ENCODE measurements at regions of chr19 and their contacts with region 1.

Region 1: DNA sequence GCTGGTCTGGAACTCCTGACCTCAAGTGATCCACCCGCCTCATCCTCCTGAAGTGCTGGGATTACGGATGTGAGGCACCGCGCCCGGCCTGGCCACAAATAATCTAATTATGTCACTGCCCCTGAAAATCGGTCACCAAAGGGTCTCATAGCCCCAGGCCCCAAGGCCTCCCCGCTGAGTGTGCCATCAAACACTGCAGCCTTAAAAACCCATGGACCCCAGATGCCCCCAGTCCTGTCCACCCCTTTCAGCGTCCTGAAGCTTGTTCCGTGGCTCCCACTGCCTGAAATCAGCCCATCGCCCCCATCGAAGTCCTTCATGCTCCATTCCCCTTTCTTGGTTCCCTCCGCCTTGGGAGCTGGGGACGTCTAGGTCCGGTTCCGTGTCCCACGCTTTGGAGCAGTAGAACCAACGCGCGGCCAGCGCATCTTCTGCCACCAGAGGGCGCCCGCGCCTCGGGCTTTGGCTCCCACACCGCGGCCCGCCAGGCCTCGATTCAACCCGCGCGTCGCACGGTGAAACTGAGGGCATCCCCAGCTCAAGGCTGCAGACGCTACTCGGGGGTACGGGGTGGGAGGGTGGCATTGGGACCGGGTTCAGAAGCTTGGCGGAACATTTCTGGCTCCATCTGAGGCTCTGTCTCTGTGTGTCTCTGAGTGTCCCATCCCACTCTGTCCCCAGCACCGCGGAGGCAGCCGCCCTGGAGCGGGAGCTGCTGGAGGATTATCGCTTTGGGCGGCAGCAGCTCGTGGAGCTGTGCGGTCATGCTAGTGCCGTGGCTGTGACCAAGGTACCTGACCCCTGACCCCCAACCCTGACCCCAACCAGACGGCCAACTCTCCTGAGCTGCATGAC is 3.5 kb downstream of the YJEFN3 start:
- DNase-seq: peak; percentile 86
- H3K4me3 Mint-ChIP-seq: no peak overlapping the region
- H3K27ac Mint-ChIP-seq: no peak overlapping the region
- H3K4me1 Mint-ChIP-seq: peaks cover 9% of the 10 kb centered on the region
- H3K27me3 Mint-ChIP-seq: peaks cover 3% of the 10 kb centered on the region

Region 2: GRCh38 chr19:19342756-19343322 is 189.3 kb before region 1 on chr19:
- CTCF ChIA-PET with region 1: no interaction called
- POLR2A ChIA-PET with region 1: no interaction called
- DNase-seq: no peak
- H3K4me3 Mint-ChIP-seq: no peak overlapping the region
- H3K27ac Mint-ChIP-seq: no peak overlapping the region
- H3K4me1 Mint-ChIP-seq: no peaks in the 10 kb centered on the region
- H3K27me3 Mint-ChIP-seq: no peaks in the 10 kb centered on the region

Region 3: DNA sequence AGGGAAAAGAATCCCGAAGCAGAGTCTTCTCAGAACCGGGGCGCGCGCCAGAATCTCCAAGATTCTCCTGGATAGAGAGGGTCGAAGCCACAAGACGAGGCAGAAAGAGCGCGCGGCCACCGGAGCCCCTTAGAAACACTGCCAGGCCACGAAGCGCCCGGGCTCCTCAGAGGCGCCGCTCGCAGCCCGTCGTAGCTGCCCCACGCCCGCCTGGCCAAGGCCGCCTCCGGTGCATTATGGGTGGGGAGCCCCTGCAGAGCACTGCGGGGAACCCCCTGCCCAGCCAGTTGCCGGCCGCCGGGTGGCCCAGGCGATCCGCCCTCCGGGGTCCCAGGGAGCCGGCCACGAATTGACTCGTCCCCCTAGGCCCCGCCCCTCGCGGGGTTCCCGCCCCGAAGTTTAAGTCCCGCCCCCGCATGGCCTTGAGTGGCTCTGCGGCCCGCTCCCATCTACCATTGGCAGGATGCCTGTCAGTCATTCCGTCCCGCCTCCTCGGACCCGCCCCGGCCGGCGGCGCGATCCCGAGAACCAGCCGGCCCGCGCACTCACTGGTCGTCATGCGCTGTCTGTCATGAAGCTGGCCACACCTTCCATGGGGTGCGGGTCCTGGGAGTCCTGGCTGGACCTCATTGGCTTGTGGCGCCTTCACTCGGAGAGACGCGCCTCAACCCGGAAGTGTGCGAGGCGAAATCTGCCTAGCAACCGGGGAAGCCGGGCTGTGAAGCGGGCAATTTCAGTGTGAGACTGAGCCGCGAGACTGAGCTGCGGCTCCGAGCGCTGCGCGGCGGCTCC is 146.9 kb before region 1 on chr19:
- CTCF ChIA-PET with region 1: no interaction called
- POLR2A ChIA-PET with region 1: no interaction called
- DNase-seq: peak; percentile 100
- H3K4me3 Mint-ChIP-seq: peak overlapping the region; percentile 87
- H3K27ac Mint-ChIP-seq: peak overlapping the region; percentile 91
- H3K4me1 Mint-ChIP-seq: peaks cover 46% of the 10 kb centered on the region
- H3K27me3 Mint-ChIP-seq: no peaks in the 10 kb centered on the region

Region 4: DNA sequence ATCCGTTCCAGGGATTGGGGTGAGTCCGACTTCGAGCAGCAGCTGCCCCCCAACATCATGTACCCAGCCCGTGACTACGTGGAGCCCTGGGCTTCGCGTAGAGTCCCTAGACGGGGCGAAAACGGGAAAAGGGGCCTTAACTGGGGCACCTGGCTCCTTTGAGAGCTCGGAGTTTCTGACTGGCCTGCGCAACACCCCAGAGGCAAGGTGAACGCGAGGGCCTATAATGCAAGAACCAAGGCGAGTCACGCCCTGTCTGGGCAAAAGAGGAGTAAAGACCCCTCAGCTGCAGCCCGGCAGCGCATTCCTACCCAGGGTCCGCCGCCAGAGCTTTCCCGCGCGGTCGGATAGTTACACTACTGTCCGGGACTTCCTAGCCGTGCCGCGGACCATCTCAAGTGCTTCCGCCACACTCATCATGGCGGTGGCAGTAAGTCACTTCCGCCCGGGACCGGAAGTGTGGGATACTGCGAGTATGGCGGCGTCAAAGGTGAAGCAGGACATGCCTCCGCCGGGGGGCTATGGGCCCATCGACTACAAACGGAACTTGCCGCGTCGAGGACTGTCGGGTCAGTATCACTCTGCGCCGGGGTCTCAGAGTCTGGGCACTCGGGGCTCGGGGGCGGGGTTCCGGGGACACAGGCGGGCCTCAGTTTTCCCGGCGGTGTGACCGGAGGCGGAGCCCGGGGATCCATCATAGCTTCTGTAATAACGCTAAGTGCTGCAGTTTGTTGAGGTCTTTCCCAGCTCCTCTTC is 16.2 kb before region 1 on chr19 and contains the start of gene NDUFA13:
- CTCF ChIA-PET with region 1: interaction called, 11 read pairs
- POLR2A ChIA-PET with region 1: interaction called, 10 read pairs
- DNase-seq: peak; percentile 95
- H3K4me3 Mint-ChIP-seq: peak within 1 kb of the TSS; percentile 93
- H3K27ac Mint-ChIP-seq: peak within 1 kb of the TSS; percentile 94
- H3K4me1 Mint-ChIP-seq: peaks cover 33% of the 10 kb centered on the region
- H3K27me3 Mint-ChIP-seq: no peaks in the 10 kb centered on the region
- total RNA-seq, gene NDUFA13: 371 to 388 TPM

Region 5: DNA sequence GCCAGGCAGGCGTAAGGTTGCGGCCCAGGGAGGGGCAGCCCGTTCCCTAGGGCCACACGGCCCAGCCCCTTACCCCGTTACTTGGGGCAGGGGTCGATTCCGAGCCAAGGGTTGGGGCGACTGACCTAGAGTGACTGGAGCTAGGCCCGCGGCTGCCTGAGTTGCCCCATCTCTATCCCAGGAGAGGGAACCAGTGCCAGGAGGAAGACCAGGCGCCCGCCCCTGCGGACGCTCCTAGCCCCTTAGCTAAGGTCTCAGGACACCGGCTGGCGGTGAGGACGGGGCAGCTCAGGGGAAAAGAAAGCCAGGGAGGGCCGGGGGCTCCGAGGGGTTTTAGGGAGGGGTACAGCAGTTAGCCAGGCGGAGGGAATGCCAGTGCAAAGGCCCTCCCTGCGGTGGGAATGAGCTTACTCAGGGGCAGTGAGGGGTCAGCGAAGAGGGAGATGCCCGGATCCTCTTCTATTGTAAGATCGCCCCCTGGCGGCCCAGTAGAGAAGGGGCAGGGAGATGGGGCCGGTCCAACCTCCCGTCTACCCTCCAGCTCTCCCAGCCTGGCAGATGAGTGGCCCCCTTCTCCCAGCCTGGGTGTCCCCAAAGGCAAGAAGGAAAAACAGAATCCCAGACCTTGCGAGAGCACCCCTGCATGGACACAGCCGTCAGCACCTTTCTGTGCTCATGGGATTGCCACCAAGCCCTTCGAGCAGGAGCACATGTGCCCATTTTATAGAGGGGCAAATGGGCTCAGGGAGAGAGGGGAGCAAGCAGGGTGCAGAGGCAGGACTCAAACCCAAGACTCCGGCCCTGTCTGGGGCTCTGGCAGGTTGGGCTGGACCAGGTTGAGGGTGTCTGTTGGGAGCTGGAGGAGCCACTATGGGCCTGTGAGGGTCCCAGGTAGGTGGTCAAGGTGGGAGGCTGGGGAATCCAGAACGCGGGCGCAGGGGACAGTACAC is 22.2 kb after region 1 on chr19:
- CTCF ChIA-PET with region 1: interaction called, 25 read pairs
- POLR2A ChIA-PET with region 1: interaction called, 4 read pairs
- DNase-seq: peak; percentile 67
- H3K4me3 Mint-ChIP-seq: no peak overlapping the region
- H3K27ac Mint-ChIP-seq: no peak overlapping the region
- H3K4me1 Mint-ChIP-seq: peaks cover 10% of the 10 kb centered on the region
- H3K27me3 Mint-ChIP-seq: no peaks in the 10 kb centered on the region

Region 6: GRCh38 chr19:19591133-19591825 is 59.1 kb after region 1 on chr19:
- CTCF ChIA-PET with region 1: interaction called, 11 read pairs
- POLR2A ChIA-PET with region 1: interaction called, 5 read pairs
- DNase-seq: peak; percentile 80
- H3K4me3 Mint-ChIP-seq: peak overlapping the region; percentile 43
- H3K27ac Mint-ChIP-seq: peak overlapping the region; percentile 93
- H3K4me1 Mint-ChIP-seq: peaks cover 80% of the 10 kb centered on the region
- H3K27me3 Mint-ChIP-seq: no peaks in the 10 kb centered on the region

Region 7: DNA sequence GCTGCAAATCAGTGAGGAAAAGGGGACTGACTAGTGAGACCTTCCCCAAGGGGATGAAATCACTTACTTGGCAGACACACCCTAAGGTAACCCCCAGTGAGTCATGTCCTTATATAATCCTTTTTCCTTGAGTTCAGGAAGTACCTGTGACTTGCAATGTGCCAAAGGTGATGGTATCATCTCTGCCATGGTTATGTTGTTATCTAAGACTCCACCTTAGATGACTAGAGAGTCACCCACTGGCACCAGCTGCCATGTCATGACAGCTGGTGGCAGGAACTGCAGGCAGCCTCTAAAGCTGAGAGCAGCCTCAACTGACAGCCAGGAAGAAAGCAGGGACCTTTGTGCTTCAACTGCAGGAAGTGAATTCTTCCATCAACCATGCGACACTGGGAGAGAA is 73.8 kb after region 1 on chr19:
- CTCF ChIA-PET with region 1: interaction called, 10 read pairs
- POLR2A ChIA-PET with region 1: interaction called, 5 read pairs
- DNase-seq: peak; percentile 65
- H3K4me3 Mint-ChIP-seq: peak overlapping the region; percentile 41
- H3K27ac Mint-ChIP-seq: peak overlapping the region; percentile 98
- H3K4me1 Mint-ChIP-seq: peaks cover 76% of the 10 kb centered on the region
- H3K27me3 Mint-ChIP-seq: no peaks in the 10 kb centered on the region

Region 8: DNA sequence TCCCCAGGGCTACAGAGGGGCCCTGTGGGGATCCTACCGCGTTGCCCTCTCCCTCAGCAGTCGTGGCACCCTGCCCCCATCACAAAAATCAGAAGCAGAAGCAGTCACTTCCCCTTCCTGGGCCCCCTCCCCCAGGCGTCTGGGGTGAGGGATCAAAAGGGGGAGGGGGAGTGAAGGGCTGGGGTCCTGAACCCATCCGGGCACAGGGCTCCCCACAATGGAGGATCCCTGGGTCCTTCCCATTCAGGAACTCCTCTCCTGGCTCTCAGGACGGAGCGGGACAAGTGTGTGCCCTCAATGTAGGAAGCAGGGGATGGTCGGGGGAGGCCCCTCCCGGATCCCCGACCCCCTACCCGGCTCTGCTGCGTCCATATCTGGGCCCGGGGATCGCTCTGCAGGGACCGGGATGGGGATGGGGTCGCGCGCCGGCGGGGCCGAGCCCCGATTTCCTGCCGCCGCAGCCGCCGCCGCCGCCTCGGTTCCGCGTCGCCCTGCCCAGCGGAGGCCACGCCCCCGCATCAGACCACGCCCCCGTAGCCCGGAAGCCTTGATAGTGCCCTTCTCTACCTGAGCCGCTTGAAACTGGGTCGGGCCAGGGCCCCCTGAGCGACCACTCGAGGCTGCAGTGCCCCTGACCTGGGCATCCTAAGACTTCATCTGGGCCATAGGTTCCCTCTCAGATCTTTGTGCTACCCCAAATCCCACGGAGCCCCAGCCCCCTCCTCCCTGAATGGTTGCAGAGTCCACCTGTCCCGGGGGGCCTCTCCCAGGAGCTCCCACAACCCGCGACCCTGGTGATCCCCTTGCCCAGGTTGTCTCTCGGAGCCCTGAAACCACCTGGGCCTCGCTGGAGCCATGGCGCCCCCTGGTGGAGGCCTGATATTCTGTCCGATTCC is 111.2 kb after region 1 on chr19 and contains the start of gene GMIP:
- CTCF ChIA-PET with region 1: interaction called, 34 read pairs
- POLR2A ChIA-PET with region 1: interaction called, 22 read pairs
- DNase-seq: peak; percentile 90
- H3K4me3 Mint-ChIP-seq: peak within 1 kb of the TSS; percentile 98
- H3K27ac Mint-ChIP-seq: peak within 1 kb of the TSS; percentile 96
- H3K4me1 Mint-ChIP-seq: peaks cover 16% of the 10 kb centered on the region
- H3K27me3 Mint-ChIP-seq: no peaks in the 10 kb centered on the region
- total RNA-seq, gene GMIP: 111 to 112 TPM

Measured in activated CD4-positive, alpha-beta memory T cell treated with anti-CD3 and anti-CD28 coated beads, Interleukin-2, amount 10 ng/mL, durations not matched to agents 7 days and 5 days (primary cell).